ENCODE measurements at regions of chr20 and their contacts with region 1.

Region 1: DNA sequence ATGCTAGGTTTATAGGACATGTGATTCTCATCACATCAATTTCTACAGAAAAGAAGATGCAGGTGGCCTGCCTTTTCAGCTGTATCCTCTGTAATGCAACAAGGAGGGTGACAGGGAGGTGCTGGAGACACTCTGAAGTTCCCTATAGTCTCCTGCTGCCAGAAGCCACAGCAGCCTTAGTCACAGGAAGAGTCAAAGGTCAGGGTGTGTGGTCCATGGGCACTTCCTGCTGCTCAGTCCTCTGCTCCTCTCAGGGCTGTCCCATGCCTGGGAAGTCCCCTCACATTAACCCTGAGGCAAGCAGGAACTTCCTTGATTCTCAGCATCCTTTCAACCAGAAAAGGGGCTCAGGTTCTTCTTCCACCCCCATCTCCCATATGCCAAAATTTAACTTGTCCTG is 144.8 kb upstream of the FOXA2 start:
- DNase-seq: no peak
- ATAC-seq: no peak
- H3K4me3 Mint-ChIP-seq: no peak overlapping the region
- H3K27ac Mint-ChIP-seq: no peak overlapping the region
- H3K4me1 Mint-ChIP-seq: no peaks in the 10 kb centered on the region
- H3K27me3 Mint-ChIP-seq: peaks cover 2% of the 10 kb centered on the region

Region 2: GRCh38 chr20:22775671-22776139 is 46.5 kb after region 1 on chr20:
- CTCF ChIA-PET with region 1: no interaction called
- POLR2A ChIA-PET with region 1: no interaction called
- intact Hi-C with region 1: loop called in 1 of 2 experiments (anchors 5 kb)
- DNase-seq: no peak
- ATAC-seq: no peak
- H3K4me3 Mint-ChIP-seq: no peak overlapping the region
- H3K27ac Mint-ChIP-seq: no peak overlapping the region
- H3K4me1 Mint-ChIP-seq: no peaks in the 10 kb centered on the region
- H3K27me3 Mint-ChIP-seq: peaks cover 5% of the 10 kb centered on the region

Region 3: GRCh38 chr20:22861229-22861980 is 132.2 kb after region 1 on chr20:
- CTCF ChIA-PET with region 1: no interaction called
- POLR2A ChIA-PET with region 1: no interaction called
- intact Hi-C with region 1: no loop called
- DNase-seq: no peak
- ATAC-seq: no peak
- H3K4me3 Mint-ChIP-seq: no peak overlapping the region
- H3K27ac Mint-ChIP-seq: no peak overlapping the region
- H3K4me1 Mint-ChIP-seq: no peaks in the 10 kb centered on the region
- H3K27me3 Mint-ChIP-seq: peaks cover 2% of the 10 kb centered on the region